Panc1 (cell line): ENCODE measurements at regions of chr12 and their contacts with region 1.

Region 1: GRCh38 chr12:31482816-31483215 is 108.1 kb downstream of the DENND5B start:
- DNase-seq: no peak
- ATAC-seq: no peak
- H3K4me3 ChIP-seq: no peak overlapping the region
- H3K27ac ChIP-seq: no peak overlapping the region
- H3K4me1 ChIP-seq: peaks cover 10% of the 10 kb centered on the region; the same call in 1 of the 2 replicates
- H3K27me3 ChIP-seq: no peaks in the 10 kb centered on the region
- CTCF ChIP-seq: no peak

Region 2: DNA sequence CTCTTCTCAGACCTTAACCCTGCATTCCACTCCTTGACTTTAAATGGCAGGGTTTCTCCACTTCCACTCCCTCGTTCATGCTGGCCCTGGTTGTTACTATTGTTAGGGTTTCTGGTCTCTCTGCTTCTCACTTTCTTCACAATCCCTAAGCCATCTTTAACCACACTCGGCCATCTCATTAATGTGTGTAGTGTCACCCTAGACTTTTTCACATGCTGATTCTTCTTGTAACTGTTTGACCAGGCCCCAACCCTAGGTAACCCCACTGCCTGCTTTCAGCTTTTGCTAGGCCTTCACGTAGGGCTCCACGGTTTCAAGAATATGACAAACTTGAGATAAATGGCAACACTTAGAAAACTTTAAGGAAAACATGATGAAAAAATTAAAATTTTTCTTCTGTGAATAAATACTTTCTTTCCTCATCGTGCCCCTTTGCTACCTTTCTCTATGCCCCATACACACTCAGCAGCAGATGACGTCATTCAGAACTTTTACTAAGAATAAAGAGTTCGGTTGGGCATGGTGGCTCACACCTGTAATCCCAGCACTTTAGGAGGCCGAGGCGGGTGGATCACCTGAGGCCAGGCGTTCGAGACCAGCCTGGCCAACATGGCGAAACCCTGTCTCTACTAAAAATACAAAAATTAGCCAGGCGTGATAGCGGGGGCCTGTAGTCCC is 982.1 kb before region 1 on chr12:
- CTCF ChIA-PET with region 1: no interaction called
- POLR2A ChIA-PET with region 1: no interaction called
- in situ Hi-C with region 1: no loop called
- intact Hi-C with region 1: loop called (anchors 5 kb)
- DNase-seq: no peak
- ATAC-seq: no peak
- H3K4me3 ChIP-seq: no peak overlapping the region
- H3K27ac ChIP-seq: no peak overlapping the region
- H3K4me1 ChIP-seq: no peaks in the 10 kb centered on the region
- H3K27me3 ChIP-seq: peaks cover 2% of the 10 kb centered on the region; the same call in 1 of the 2 replicates
- CTCF ChIP-seq: no peak

Region 3: GRCh38 chr12:31578632-31579031 is 95.8 kb after region 1 on chr12:
- CTCF ChIA-PET with region 1: no interaction called
- POLR2A ChIA-PET with region 1: interaction called, 12 read pairs
- in situ Hi-C with region 1: no loop called
- intact Hi-C with region 1: no loop called
- DNase-seq: no peak
- ATAC-seq: no peak
- H3K4me3 ChIP-seq: no peak overlapping the region
- H3K27ac ChIP-seq: no peak overlapping the region
- H3K4me1 ChIP-seq: no peaks in the 10 kb centered on the region; the same call in 1 of the 2 replicates
- H3K27me3 ChIP-seq: no peaks in the 10 kb centered on the region
- CTCF ChIP-seq: no peak